ENCODE measurements at regions of chr18 and their contacts with region 1.

Region 1: DNA sequence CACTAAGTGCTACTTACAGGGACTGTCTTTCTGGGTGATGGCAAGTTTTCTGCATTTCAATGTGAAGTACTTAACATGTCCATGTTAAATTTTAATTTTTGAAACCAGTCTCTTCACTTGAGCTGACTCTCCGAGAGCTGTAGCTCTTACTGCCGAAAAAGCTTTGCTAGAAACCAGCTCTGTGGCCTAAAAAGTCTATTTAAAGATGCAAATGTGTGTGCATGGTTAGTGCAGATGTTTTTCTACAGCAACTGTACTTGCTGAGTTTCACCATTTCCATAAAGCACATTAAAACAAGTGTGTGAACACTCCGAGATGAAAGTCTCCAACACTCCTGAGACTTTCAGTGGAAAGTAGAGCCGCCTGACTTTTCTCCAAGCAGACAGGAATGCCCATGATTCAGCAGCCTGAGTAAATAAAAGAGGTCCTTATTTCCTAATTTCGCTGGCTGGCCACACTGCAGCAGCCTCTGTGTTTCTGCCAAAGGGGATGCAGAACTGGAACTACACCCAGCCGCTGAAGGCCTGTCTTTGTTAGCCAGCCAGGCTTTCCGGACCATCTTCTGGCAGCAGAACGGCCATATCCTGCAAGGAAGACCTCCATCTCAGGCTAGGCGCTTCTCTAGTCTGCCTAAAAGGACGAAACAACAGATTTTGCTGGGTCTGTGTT is 121.2 kb downstream of the ZNF521 start:
- DNase-seq: peak; percentile 97
- H3K4me3 ChIP-seq: no peak overlapping the region
- H3K27ac ChIP-seq: peak overlapping the region; percentile 90
- H3K4me1 ChIP-seq: peaks cover 75% of the 10 kb centered on the region
- H3K27me3 ChIP-seq: no peaks in the 10 kb centered on the region
- CTCF ChIP-seq: no peak
- POLR2A ChIP-seq: no peak

Region 2: GRCh38 chr18:24846138-24846537 is 384.7 kb before region 1 on chr18:
- CTCF ChIA-PET with region 1: no interaction called
- POLR2A ChIA-PET with region 1: no interaction called
- dilution Hi-C with region 1: no loop called
- intact Hi-C with region 1: no loop called
- DNase-seq: no peak
- H3K4me3 ChIP-seq: no peak overlapping the region
- H3K27ac ChIP-seq: no peak overlapping the region
- H3K4me1 ChIP-seq: no peaks in the 10 kb centered on the region
- H3K27me3 ChIP-seq: peaks cover 28 to 31% of the 10 kb centered on the region in 2 experiments
- CTCF ChIP-seq: no peak
- POLR2A ChIP-seq: no peak

Region 3: GRCh38 chr18:24862201-24862816 is 368.5 kb before region 1 on chr18:
- CTCF ChIA-PET with region 1: no interaction called
- POLR2A ChIA-PET with region 1: no interaction called
- dilution Hi-C with region 1: no loop called
- intact Hi-C with region 1: loop called (anchors 5 kb)
- DNase-seq: peak; percentile 63
- H3K4me3 ChIP-seq: peak overlapping the region in 1 of 3 experiments; percentile 29
- H3K27ac ChIP-seq: peak overlapping the region; percentile 89
- H3K4me1 ChIP-seq: peaks cover 32% of the 10 kb centered on the region
- H3K27me3 ChIP-seq: no peaks in the 10 kb centered on the region
- CTCF ChIP-seq: no peak
- POLR2A ChIP-seq: no peak

Region 4: GRCh38 chr18:24987303-24988252 is 243.2 kb before region 1 on chr18:
- CTCF ChIA-PET with region 1: no interaction called
- POLR2A ChIA-PET with region 1: no interaction called
- dilution Hi-C with region 1: no loop called
- intact Hi-C with region 1: loop called (anchors 2 kb)
- DNase-seq: peak; percentile 35
- H3K4me3 ChIP-seq: no peak overlapping the region
- H3K27ac ChIP-seq: no peak overlapping the region
- H3K4me1 ChIP-seq: peaks cover 46% of the 10 kb centered on the region
- H3K27me3 ChIP-seq: no peaks in the 10 kb centered on the region
- CTCF ChIP-seq: no peak
- POLR2A ChIP-seq: no peak

Region 5: GRCh38 chr18:25099895-25100294 is 130.9 kb before region 1 on chr18:
- CTCF ChIA-PET with region 1: interaction called, 4 read pairs
- POLR2A ChIA-PET with region 1: interaction called, 3 read pairs
- dilution Hi-C with region 1: no loop called
- intact Hi-C with region 1: loop called (anchors 5 kb)
- DNase-seq: peak; percentile 63
- H3K4me3 ChIP-seq: no peak overlapping the region
- H3K27ac ChIP-seq: peak overlapping the region; percentile 20
- H3K4me1 ChIP-seq: peaks cover 58% of the 10 kb centered on the region
- H3K27me3 ChIP-seq: no peaks in the 10 kb centered on the region
- CTCF ChIP-seq: no peak
- POLR2A ChIP-seq: no peak

Region 6: DNA sequence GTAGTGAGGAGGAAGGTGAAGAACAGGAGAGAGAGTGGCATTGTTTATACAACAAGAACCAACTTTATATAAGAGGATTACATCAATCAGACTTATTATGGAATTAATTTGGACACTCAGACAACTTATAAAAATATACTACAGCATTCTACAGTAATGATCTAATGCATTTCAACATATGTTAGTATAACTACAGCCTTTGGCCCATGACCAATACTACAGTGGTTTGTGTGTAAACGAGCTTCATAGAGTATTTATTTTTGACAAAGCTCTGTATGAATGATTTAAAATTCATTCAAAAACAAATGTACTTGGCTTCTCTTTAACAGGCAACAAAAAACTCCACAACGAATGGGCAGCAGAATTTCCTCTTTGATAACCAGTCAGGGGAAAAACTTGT is 48.3 kb after region 1 on chr18:
- CTCF ChIA-PET with region 1: interaction called, 5 read pairs
- POLR2A ChIA-PET with region 1: interaction called, 8 read pairs
- dilution Hi-C with region 1: no loop called
- intact Hi-C with region 1: loop called (anchors 1 kb)
- DNase-seq: peak; percentile 51
- H3K4me3 ChIP-seq: peak overlapping the region in 1 of 3 experiments; percentile 60
- H3K27ac ChIP-seq: peak overlapping the region; percentile 51
- H3K4me1 ChIP-seq: peaks cover 93% of the 10 kb centered on the region
- H3K27me3 ChIP-seq: no peaks in the 10 kb centered on the region
- CTCF ChIP-seq: no peak
- POLR2A ChIP-seq: no peak

Region 7: GRCh38 chr18:25298853-25299274 is 68.1 kb after region 1 on chr18:
- CTCF ChIA-PET with region 1: interaction called, 8 read pairs
- POLR2A ChIA-PET with region 1: interaction called, 7 read pairs
- dilution Hi-C with region 1: no loop called
- intact Hi-C with region 1: loop called (anchors 1 kb)
- DNase-seq: peak; percentile 98
- H3K4me3 ChIP-seq: peak overlapping the region in 1 of 3 experiments; percentile 29
- H3K27ac ChIP-seq: peak overlapping the region; percentile 94
- H3K4me1 ChIP-seq: peaks cover 39% of the 10 kb centered on the region
- H3K27me3 ChIP-seq: no peaks in the 10 kb centered on the region
- CTCF ChIP-seq: no peak
- POLR2A ChIP-seq: peak; percentile 70

Region 8: DNA sequence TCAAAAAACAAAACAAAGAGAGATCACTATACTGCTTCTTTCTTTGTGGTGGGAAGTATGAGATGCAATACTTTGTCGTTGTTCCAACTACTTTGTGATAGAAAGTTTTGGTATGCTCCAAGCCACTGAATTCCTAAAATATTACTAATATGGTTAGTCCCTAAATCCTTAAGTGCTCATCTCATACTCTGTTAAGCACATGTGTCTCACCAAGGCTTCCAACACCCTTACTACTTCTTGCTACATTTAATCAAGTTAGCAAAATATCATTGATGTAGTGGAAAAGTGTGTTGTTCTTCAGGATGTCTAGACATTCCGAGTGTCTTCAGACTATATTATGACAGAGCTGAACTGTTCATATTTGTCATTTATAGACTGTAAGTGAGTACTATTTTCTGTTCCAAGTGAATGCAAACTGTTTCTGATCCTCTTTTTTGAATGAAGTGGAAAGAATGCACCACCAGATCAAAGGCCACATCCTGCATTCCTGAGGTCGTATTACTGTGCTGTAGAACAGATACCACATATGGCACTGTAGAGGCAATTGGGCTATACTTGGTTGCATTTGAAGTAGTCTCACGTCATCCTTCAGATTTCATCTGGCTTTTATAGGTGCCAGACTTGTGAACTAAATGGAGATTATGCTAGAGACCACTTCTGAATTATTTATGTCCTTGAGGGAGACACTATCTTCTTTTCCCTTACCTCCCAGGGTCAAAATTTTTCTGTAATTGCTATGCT is 419.6 kb after region 1 on chr18:
- CTCF ChIA-PET with region 1: no interaction called
- POLR2A ChIA-PET with region 1: no interaction called
- dilution Hi-C with region 1: no loop called
- intact Hi-C with region 1: no loop called
- DNase-seq: peak; percentile 55
- H3K4me3 ChIP-seq: no peak overlapping the region
- H3K27ac ChIP-seq: no peak overlapping the region
- H3K4me1 ChIP-seq: no peaks in the 10 kb centered on the region
- H3K27me3 ChIP-seq: no peaks in the 10 kb centered on the region
- CTCF ChIP-seq: no peak
- POLR2A ChIP-seq: no peak

Region 9: DNA sequence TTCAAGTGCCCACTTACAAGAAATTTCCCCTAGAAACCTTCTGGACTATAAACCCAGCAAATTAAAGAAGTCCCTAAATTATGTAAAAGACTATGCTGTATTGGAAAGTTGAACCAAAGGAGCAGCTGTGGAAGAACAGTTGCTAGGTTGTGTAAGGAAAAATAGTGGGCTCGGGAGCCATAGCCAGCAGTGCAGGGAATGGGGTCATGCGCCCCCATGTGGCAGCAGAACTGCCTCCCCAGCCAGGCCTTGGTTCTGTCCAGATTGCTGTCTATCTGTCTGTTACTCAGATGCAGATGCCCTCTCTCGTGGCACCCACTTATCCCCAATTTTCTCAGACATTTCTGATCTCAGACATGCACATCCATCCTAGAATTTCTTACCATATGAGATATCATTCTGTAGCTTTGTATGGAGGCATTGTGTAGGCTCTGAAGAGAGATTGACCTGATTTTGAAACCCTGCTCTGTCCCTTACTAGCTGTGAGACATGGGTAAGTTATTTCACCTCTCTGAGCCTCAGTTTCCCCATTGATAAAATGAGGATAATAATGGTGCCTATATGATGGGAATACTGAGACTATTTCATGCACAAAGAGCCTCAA is 601.3 kb after region 1 on chr18:
- CTCF ChIA-PET with region 1: interaction called, 4 read pairs
- POLR2A ChIA-PET with region 1: interaction called, 3 read pairs
- dilution Hi-C with region 1: no loop called
- intact Hi-C with region 1: loop called (anchors 2 kb)
- DNase-seq: peak; percentile 73
- H3K4me3 ChIP-seq: no peak overlapping the region
- H3K27ac ChIP-seq: no peak overlapping the region
- H3K4me1 ChIP-seq: peaks cover 4% of the 10 kb centered on the region
- H3K27me3 ChIP-seq: peaks cover 0 to 5% of the 10 kb centered on the region in 2 experiments
- CTCF ChIP-seq: peak; percentile 83 to 96
- POLR2A ChIP-seq: no peak